ENCODE measurements at regions of chr19 and their contacts with region 1.

Region 1: DNA sequence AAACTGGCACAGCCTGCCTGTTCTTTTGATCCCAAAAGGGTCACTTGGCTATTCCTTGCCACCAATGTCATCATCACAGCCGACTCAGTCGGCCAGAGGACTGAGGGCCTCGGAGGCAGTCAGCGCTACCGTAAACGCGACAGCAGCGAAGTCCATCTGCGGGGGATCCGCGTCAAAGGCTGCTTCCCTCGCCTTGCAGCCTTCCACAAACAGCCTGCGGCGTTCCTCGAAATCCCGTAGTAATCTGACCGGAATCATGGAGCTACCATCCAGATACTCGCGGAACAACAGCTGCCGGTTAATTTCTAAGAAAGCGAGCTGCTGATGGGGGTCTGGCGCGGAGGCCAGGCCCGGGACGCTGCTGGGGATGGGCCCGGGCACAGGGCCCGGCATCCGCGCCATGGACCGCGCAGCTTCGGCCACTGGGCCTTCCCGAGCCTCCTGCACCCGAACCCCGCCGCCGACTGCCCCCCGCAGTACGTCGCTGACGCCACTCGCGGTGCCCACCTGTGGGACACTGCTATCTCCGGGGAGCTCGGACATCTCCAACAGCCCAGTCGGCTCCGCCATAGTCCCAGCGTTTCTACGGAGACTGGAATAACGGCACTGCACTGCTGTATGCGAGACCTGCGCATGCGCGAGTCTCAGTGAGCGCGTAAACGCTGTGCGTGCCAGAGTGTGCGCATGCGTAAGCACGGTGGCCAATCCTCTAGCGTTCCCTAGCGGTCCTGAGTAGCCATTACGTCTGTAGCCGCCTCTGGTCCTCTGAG is at the start of gene EID2B:
- DNase-seq: peak; percentile 96
- H3K27ac ChIP-seq: peak within 1 kb of the TSS; percentile 79
- CTCF ChIP-seq: peak; percentile 97

Region 2: DNA sequence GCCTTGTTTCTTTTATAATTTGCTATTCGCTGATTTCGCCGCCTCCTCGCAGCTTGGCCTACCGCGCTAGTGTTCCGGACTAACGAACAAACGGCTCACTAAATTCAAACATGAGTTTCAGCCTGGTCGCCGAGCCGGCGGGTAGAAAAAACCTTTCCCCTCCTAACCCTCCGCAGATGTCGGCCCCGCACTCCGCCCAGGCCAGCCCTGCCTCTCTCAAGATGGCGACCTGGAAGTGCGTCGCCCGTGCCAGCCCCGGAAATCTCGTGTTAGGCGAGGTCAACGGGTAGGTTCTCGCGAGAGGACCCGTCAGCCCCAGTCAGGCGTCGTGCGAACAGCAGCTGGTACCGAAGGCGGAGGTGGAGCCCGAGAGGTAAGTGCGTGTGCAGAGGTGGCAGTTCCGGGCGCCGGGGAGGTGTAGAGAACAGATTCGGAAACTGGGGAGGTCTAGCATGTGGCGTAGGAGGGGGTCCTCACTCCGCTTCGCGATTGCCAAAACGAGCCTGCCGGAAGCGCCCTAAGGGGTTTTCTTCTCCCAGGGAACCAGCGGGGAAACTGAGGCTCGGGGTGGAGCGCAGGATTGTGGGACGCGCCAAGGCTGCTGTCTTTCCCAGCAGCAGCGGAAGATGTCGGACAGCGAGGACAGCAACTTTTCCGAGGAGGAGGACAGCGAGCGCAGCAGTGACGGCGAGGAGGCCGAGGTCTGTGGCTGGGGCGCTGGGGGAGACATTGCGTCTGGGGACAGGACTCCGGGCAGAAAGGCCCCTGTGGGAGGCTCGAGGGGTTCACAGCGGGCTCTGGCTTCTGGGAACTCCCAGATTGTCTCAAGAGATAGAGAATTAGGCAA is 86.9 kb before region 1 on chr19 and contains the start of gene SUPT5H:
- CTCF ChIA-PET with region 1: interaction called, 13 read pairs
- POLR2A ChIA-PET with region 1: no interaction called
- DNase-seq: peak; percentile 99
- H3K27ac ChIP-seq: peak within 1 kb of the TSS; percentile 82
- CTCF ChIP-seq: no peak

Measured in RWPE1 (cell line).